PC-9 (cell line): ENCODE measurements at regions of chr7 and their contacts with region 1.

Region 1: DNA sequence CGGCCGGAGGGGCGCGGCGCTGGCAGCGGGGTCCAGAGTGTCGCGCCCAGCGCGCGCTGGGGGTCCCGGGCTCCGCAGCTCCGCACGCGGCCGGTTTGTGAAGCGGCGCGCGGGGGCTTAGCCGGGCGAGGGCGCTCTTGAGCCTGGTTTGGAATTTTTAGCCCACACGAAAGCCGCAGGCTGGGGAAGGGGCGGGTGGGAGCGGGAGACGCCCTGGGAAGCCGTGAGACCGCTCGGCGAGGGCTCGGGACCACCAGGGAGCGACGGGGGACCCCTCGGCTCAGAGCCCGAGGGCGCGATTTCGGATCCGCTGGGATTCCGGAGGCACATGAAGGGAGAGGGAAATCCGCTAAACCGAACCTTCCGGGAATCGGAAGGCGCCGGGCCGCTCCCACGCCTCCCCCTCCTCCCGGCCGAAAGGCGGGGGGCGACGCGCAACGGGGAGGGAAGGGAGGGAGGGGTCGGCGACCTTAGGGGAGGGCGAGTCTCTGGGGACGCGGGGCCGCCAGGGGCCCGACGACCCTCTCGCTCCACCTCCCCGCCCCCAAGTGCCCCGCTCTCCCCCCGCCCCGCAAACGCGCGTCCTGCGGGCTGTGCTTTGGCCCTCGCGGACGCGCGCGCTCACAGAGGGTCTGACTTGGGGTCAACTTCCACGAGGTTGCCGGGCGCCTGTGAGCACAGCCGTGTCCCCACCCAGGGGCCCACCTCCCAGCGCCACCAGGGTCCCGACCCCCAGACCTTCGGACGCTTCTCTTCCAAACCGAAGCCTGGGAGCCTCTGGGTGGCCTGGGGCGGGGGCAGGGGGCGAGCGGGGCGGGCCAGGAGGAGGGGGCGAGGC is 5.1 kb upstream of the ELFN1 start:
- DNase-seq: peak in 1 of 2 experiments; percentile 66
- H3K4me3 ChIP-seq: peak overlapping the region; percentile 38; the same call in 1 of the 2 replicates
- H3K27ac ChIP-seq: no peak overlapping the region
- H3K4me1 ChIP-seq: peaks cover 8% of the 10 kb centered on the region; the same call in 1 of the 2 replicates
- H3K27me3 ChIP-seq: peaks cover 60% of the 10 kb centered on the region
- CTCF ChIP-seq: peak; percentile 79

Region 2: GRCh38 chr7:1678542-1679325 is 13.8 kb after region 1 on chr7:
- CTCF ChIA-PET with region 1: interaction called, 11 read pairs
- POLR2A ChIA-PET with region 1: no interaction called
- intact Hi-C with region 1: no loop called
- DNase-seq: no peak
- H3K4me3 ChIP-seq: no peak overlapping the region
- H3K27ac ChIP-seq: no peak overlapping the region
- H3K4me1 ChIP-seq: no peaks in the 10 kb centered on the region
- H3K27me3 ChIP-seq: peaks cover 82% of the 10 kb centered on the region
- CTCF ChIP-seq: no peak

Region 3: DNA sequence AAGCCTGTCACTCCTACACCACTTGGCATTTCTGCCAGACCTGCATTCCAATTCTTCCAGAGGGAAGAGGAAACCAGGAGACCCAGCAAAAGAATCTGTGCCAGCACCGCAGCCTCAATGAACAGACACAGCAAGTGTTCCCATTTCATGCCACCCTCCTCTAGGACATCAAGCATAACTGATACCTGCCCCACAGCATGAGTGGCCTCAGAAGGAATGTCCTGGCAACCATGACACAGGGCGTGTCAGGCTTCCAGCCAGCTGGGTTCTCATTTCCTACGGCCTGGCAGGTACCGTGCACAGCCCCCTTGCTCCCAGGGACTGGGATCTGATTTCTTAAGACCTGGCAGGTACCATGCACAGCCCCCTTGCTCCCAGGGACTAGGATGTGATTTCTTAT is 560.0 kb after region 1 on chr7:
- CTCF ChIA-PET with region 1: interaction called, 10 read pairs
- POLR2A ChIA-PET with region 1: no interaction called
- intact Hi-C with region 1: no loop called
- DNase-seq: peak; percentile 65 to 83
- H3K4me3 ChIP-seq: no peak overlapping the region
- H3K27ac ChIP-seq: no peak overlapping the region
- H3K4me1 ChIP-seq: no peaks in the 10 kb centered on the region
- H3K27me3 ChIP-seq: no peaks in the 10 kb centered on the region
- CTCF ChIP-seq: no peak